Ascending aorta (tissue), 2 donors: ENCODE measurements at regions of chr3 and their contacts with region 1.

Region 1: DNA sequence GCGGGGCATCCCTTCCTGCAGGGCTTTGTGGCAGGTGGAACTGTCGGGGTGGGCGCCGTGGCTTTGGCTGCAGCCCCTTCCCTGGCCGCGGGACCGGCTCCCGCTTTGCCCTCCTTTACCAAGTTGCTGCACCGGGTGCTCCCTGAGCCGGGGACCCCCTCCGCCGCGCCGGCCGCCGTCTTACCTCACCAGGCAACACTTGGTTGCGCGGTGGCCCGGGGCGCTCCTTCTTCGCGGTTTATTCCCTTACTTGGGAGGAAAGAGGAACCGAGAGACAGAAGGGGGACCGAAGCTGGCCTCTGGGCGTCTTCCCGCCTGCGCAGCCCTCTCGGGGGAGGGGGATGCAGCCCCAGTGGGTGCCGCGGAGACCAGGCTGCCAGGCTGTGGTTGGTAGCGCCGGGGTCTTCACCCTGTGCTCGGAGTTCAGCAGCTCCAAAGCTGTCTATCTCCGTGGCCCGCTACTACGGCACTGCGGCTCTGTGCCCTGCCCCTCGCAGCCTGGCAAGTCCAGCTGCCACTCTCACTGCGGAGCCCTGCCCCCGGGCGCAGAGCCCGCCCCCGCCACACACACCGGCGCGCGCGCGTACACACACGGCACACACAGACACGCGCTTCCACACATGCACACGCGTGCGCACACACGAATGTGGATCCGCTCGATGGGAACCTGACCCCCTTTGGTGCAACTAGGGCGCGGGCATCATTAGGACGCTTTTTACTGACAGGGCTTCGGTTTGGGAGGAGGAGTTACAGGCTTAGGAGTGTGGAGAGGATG is at the start of gene DGKG:
- DNase-seq: peak in 1 of 2 donors; percentile 87
- H3K4me3 ChIP-seq: peak within 1 kb of the TSS; percentile 70 to 84
- H3K27ac ChIP-seq: peak within 1 kb of the TSS; percentile 42 to 61
- H3K4me1 ChIP-seq: peaks cover 0 to 23% of the 10 kb centered on the region in 2 donors
- H3K27me3 ChIP-seq: no peaks in the 10 kb centered on the region
- CTCF ChIP-seq: no peak
- total RNA-seq, gene DGKG: 11.1 TPM

Region 2: GRCh38 chr3:185983495-185984141 is 378.3 kb before region 1 on chr3:
- intact Hi-C with region 1: loop called (anchors 5 kb)
- DNase-seq: peak in 1 of 2 donors; percentile 85
- H3K4me3 ChIP-seq: peak overlapping the region in 1 of 2 donors; percentile 33
- H3K27ac ChIP-seq: no peak overlapping the region
- H3K4me1 ChIP-seq: peaks cover 4 to 38% of the 10 kb centered on the region in 2 donors
- H3K27me3 ChIP-seq: no peaks in the 10 kb centered on the region
- CTCF ChIP-seq: peak; percentile 82 to 92 (median 90)

Region 3: DNA sequence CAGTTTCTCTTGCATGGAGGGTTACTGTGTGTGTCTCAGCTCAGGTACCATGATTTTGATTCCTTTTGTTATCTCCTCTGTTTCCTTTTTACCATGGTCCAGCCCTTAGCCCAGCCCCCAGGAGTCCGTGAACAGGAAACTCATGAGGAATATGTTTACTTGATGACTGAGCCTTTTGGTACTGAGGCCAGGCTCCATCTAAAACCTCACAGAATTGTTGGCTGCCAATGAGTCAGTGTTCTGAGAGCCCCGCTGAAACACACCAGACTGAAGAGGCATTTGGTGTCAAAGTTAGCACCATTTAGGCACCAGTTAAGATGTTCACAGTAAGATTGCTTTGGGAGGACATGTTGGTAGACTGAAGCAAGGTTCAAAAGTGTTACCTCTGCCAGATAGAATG is 80.8 kb before region 1 on chr3:
- intact Hi-C with region 1: loop called (anchors 2 kb)
- DNase-seq: peak in 1 of 2 donors; percentile 75
- H3K4me3 ChIP-seq: no peak overlapping the region
- H3K27ac ChIP-seq: peak overlapping the region; percentile 58 to 77
- H3K4me1 ChIP-seq: peaks cover 0 to 4% of the 10 kb centered on the region in 2 donors
- H3K27me3 ChIP-seq: no peaks in the 10 kb centered on the region
- CTCF ChIP-seq: no peak

Region 4: GRCh38 chr3:186413615-186414415 is 51.9 kb after region 1 on chr3:
- intact Hi-C with region 1: loop called (anchors 2 kb)
- DNase-seq: peak in 1 of 2 donors; percentile 81
- H3K4me3 ChIP-seq: peak overlapping the region; percentile 61 to 63
- H3K27ac ChIP-seq: peak overlapping the region; percentile 56 to 69
- H3K4me1 ChIP-seq: peaks cover 0 to 17% of the 10 kb centered on the region in 2 donors
- H3K27me3 ChIP-seq: no peaks in the 10 kb centered on the region
- CTCF ChIP-seq: no peak

Region 5: GRCh38 chr3:186534113-186534669 is 172.2 kb after region 1 on chr3:
- intact Hi-C with region 1: loop called (anchors 10 kb)
- DNase-seq: no peak
- H3K4me3 ChIP-seq: no peak overlapping the region
- H3K27ac ChIP-seq: no peak overlapping the region
- H3K4me1 ChIP-seq: no peaks in the 10 kb centered on the region
- H3K27me3 ChIP-seq: no peaks in the 10 kb centered on the region
- CTCF ChIP-seq: no peak